ENCODE measurements at regions of chr12 and their contacts with region 1.

Region 1: GRCh38 chr12:38138225-38139221 is 178.1 kb upstream of the ALG10B start:
- DNase-seq: peak; percentile 26
- H3K4me3 Mint-ChIP-seq: peak overlapping the region; percentile 78
- H3K27ac Mint-ChIP-seq: no peak overlapping the region
- H3K4me1 Mint-ChIP-seq: peaks cover 8% of the 10 kb centered on the region
- H3K27me3 Mint-ChIP-seq: no peaks in the 10 kb centered on the region

Region 2: DNA sequence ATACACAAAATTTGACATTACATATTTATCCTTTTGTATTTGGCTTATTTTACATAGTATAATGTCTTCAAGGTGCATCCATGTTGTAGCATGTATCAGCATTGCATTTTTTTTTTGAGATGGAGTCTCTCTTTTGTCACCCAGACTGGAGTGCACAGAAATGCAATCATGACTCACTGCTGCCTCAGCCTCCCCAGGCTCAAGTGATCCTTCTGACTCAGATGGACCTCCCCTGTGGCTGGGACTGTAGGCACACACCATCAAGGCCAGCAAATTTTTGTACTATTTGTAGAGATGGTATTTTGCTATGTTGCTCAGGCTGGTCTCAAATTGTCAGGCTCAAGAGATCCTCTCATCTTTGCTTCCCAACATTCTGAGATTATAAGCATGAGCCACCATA is 36.3 kb before region 1 on chr12:
- intact Hi-C with region 1: no loop called
- DNase-seq: no peak
- H3K4me3 Mint-ChIP-seq: no peak overlapping the region
- H3K27ac Mint-ChIP-seq: no peak overlapping the region
- H3K4me1 Mint-ChIP-seq: no peaks in the 10 kb centered on the region
- H3K27me3 Mint-ChIP-seq: no peaks in the 10 kb centered on the region

Region 3: DNA sequence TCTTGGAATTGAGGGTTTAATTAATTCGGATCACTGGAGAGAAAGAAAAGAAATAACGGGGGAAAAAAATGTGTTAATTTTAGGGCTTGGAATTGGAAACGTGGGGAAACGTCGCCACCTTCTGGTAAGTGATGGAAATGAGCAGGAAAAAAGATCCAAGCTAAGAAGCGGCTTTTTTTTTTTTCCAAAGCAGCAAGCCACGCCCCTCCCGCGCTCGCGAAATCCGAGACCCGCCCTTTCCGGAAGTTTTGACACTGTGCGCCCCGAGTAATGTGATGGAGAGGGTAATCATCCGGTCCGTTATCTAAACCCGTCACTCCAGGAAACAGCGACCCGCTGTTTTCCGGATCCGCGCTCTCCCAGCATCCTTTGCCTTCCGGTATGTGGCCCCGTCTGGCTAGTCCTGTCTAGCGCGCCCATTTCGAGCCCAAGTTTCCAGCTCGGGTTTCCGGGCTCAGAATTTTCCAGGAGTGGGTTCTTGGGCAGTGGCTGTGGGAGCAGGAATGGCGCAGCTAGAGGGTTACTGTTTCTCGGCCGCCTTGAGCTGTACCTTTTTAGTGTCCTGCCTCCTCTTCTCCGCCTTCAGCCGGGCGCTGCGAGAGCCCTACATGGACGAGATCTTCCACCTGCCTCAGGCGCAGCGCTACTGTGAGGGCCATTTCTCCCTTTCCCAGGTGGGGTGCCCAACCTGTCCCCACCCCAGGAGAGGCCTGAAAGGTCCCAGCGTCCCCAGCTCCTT is 178.0 kb after region 1 on chr12 and contains the start of gene ALG10B:
- intact Hi-C with region 1: loop called (anchors 1 kb)
- DNase-seq: peak; percentile 90
- H3K4me3 Mint-ChIP-seq: peak within 1 kb of the TSS; percentile 97
- H3K27ac Mint-ChIP-seq: peak within 1 kb of the TSS; percentile 94
- H3K4me1 Mint-ChIP-seq: peaks cover 14% of the 10 kb centered on the region
- H3K27me3 Mint-ChIP-seq: no peaks in the 10 kb centered on the region
- total RNA-seq, gene ALG10B: 13.5 and 14.6 TPM in 2 replicates